ENCODE measurements at regions of chr11 and their contacts with region 1.

Region 1: GRCh38 chr11:30635401-30635989 is 49.3 kb upstream of the MPPED2 start:
- DNase-seq: peak; percentile 44 to 95 (median 76)

Region 2: GRCh38 chr11:30594646-30595411 is 40.7 kb before region 1 on chr11:
- intact Hi-C with region 1: loop called (anchors 5 kb)
- DNase-seq: no peak

Measured in posterior cingulate gyrus (tissue), 11 donors.